Activated CD4-positive, alpha-beta T cell treated with anti-CD3 and anti-CD28 coated beads, Interleukin-2, amount 10 ng/mL, durations not matched to agents 7 days and 5 days (primary cell): ENCODE measurements at regions of chr9 and their contacts with region 1.

Region 1: DNA sequence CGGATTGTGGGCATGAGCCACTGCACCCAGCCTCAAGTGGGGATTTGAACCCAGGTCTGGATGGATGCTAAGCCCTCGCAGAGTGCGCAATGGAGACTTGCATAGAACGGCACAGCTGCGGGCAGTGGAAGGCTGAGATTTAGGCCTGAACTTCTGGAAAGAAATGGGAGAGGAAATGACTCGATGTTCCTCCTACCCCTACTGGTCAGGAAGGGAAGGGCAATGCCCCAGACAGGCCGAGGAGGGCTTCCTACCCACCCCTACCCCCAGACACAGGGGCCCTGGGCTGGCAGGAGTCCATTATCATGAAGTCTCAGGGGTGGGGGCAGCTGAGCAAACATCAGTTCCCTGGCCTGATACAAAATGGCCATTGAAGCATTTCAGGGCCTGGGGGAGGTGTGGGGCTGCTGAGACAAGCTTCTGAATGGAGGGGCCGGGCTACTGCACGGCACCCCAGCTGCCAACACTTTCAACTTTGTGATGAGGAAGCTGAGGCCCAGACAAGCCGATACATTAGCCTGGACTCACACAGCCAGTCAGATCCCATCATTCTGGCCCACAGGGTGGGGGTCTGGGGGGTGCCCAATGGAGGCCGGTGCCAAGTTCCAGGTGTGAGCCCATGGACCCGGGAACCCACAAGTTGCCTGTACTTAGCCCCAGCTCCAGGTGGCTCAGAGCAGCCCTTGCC is 13.5 kb upstream of the WDR38 start:
- DNase-seq: no peak
- H3K4me3 Mint-ChIP-seq: no peak overlapping the region
- H3K27ac Mint-ChIP-seq: no peak overlapping the region
- H3K4me1 Mint-ChIP-seq: no peaks in the 10 kb centered on the region
- H3K27me3 Mint-ChIP-seq: peaks cover 13% of the 10 kb centered on the region

Region 2: GRCh38 chr9:124812401-124813016 is 27.2 kb before region 1 on chr9:
- CTCF ChIA-PET with region 1: no interaction called
- POLR2A ChIA-PET with region 1: interaction called, 11 read pairs
- DNase-seq: no peak
- H3K4me3 Mint-ChIP-seq: no peak overlapping the region
- H3K27ac Mint-ChIP-seq: no peak overlapping the region
- H3K4me1 Mint-ChIP-seq: no peaks in the 10 kb centered on the region
- H3K27me3 Mint-ChIP-seq: peaks cover 4% of the 10 kb centered on the region